Naive thymus-derived CD4-positive, alpha-beta T cell (primary cell): ENCODE measurements at regions of chr1 and their contacts with region 1.

Region 1: GRCh38 chr1:88150330-88150729 is 533.7 kb upstream of the PKN2 start:
- DNase-seq: no peak
- ATAC-seq: no peak
- H3K4me3 ChIP-seq: no peak overlapping the region
- H3K4me3 Mint-ChIP-seq: no peak overlapping the region
- H3K27ac ChIP-seq: no peak overlapping the region
- H3K27ac Mint-ChIP-seq: no peak overlapping the region
- H3K4me1 ChIP-seq: no peaks in the 10 kb centered on the region
- H3K4me1 Mint-ChIP-seq: no peaks in the 10 kb centered on the region
- H3K27me3 ChIP-seq: no peaks in the 10 kb centered on the region
- H3K27me3 Mint-ChIP-seq: peaks cover 0 to 26% (median 3%) of the 10 kb centered on the region in 5 donors

Region 2: GRCh38 chr1:88089961-88090360 is 60.4 kb before region 1 on chr1:
- CTCF ChIA-PET with region 1: no interaction called
- POLR2A ChIA-PET with region 1: no interaction called
- intact Hi-C with region 1: loop called in 1 of 2 experiments (anchors 2 kb)
- DNase-seq: no peak
- ATAC-seq: no peak
- H3K4me3 ChIP-seq: no peak overlapping the region
- H3K4me3 Mint-ChIP-seq: no peak overlapping the region
- H3K27ac ChIP-seq: no peak overlapping the region
- H3K27ac Mint-ChIP-seq: no peak overlapping the region
- H3K4me1 ChIP-seq: no peaks in the 10 kb centered on the region
- H3K4me1 Mint-ChIP-seq: no peaks in the 10 kb centered on the region
- H3K27me3 ChIP-seq: no peaks in the 10 kb centered on the region
- H3K27me3 Mint-ChIP-seq: peaks cover 0 to 13% (median 8%) of the 10 kb centered on the region in 5 donors